CD4-positive, alpha-beta memory T cell (primary cell): ENCODE measurements at regions of chr11 and their contacts with region 1.

Region 1: DNA sequence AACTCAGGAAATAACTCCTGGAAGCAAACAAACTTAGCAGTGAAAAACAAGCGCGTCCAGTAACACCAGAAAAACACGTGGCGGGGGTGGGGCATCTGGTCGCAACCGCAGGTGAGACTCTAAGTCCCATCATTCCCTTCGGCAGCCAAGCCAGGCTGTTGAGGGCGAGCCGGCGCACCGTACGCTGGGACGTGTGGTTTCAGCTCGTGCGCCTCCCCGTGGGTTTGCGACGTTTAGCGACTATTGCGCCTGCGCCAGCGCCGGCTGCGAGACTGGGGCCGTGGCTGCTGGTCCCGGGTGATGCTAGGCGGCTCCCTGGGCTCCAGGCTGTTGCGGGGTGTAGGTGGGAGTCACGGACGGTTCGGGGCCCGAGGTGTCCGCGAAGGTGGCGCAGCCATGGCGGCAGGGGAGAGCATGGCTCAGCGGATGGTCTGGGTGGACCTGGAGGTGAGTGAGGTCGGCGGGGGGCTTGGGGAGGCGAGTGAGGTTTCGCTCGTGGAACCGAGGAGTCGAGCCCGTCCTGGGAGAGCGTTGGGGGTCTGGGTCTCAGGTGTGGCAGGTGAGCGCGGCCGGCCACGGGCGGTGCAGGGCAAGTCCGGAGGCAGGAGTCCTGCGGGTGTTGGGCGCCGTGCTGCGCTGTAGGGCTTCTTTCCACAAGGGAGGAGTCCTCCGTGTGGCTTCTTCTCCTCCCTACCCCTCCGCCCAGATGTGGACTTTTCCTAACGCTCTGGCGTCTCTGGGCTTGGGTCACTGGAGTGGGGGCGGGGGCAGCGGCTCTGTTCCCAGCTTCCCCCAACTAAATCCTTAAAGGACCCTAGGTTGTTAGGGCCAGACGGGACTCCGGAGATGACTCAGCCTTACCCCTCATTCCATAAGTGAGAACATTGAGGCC is at the start of gene REXO2:
- DNase-seq: peak; percentile 91 to 94 (median 93)
- H3K4me3 ChIP-seq: peak within 1 kb of the TSS; percentile 71 to 98
- H3K4me3 Mint-ChIP-seq: peak within 1 kb of the TSS; percentile 93 to 99 (median 98)
- H3K27ac ChIP-seq: peak within 1 kb of the TSS; percentile 73
- H3K27ac Mint-ChIP-seq: peak within 1 kb of the TSS; percentile 92 to 98 (median 95)
- H3K4me1 ChIP-seq: peaks cover 32% of the 10 kb centered on the region
- H3K4me1 Mint-ChIP-seq: peaks cover 26 to 34% (median 30%) of the 10 kb centered on the region in 4 donors
- H3K27me3 ChIP-seq: no peaks in the 10 kb centered on the region
- H3K27me3 Mint-ChIP-seq: no peaks in the 10 kb centered on the region
- total RNA-seq, gene REXO2: 64.8 to 70.4 TPM

Region 2: GRCh38 chr11:113875234-113876073 is 564.0 kb before region 1 on chr11 and contains the start of gene USP28:
- CTCF ChIA-PET with region 1: no interaction called
- POLR2A ChIA-PET with region 1: no interaction called
- intact Hi-C with region 1: loop called (anchors 5 kb)
- DNase-seq: peak; percentile 71 to 84 (median 76)
- H3K4me3 ChIP-seq: peak within 1 kb of the TSS; percentile 48 to 78
- H3K4me3 Mint-ChIP-seq: peak within 1 kb of the TSS; percentile 98 to 100 (median 99)
- H3K27ac ChIP-seq: peak within 1 kb of the TSS; percentile 68
- H3K27ac Mint-ChIP-seq: peak within 1 kb of the TSS; percentile 91 to 99 (median 98)
- H3K4me1 ChIP-seq: peaks cover 24% of the 10 kb centered on the region
- H3K4me1 Mint-ChIP-seq: peaks cover 23 to 55% (median 40%) of the 10 kb centered on the region in 4 donors
- H3K27me3 ChIP-seq: no peaks in the 10 kb centered on the region
- H3K27me3 Mint-ChIP-seq: no peaks in the 10 kb centered on the region
- total RNA-seq, gene USP28: 17.2 to 17.3 TPM

Region 3: GRCh38 chr11:113994077-113994954 is 445.2 kb before region 1 on chr11:
- CTCF ChIA-PET with region 1: no interaction called
- POLR2A ChIA-PET with region 1: no interaction called
- intact Hi-C with region 1: loop called (anchors 1 kb)
- DNase-seq: peak in 4 of 5 donors; percentile 18 to 33 (median 22)
- H3K4me3 ChIP-seq: no peak overlapping the region
- H3K4me3 Mint-ChIP-seq: no peak overlapping the region
- H3K27ac ChIP-seq: no peak overlapping the region
- H3K27ac Mint-ChIP-seq: no peak overlapping the region
- H3K4me1 ChIP-seq: no peaks in the 10 kb centered on the region
- H3K4me1 Mint-ChIP-seq: peaks cover 0 to 1% (median 0%) of the 10 kb centered on the region in 4 donors
- H3K27me3 ChIP-seq: no peaks in the 10 kb centered on the region
- H3K27me3 Mint-ChIP-seq: peaks cover 6 to 13% of the 10 kb centered on the region in 2 donors

Region 4: GRCh38 chr11:114348200-114349191 is 91.0 kb before region 1 on chr11:
- CTCF ChIA-PET with region 1: no interaction called
- POLR2A ChIA-PET with region 1: interaction called, 3 read pairs
- intact Hi-C with region 1: loop called (anchors 1 kb)
- DNase-seq: peak in 4 of 5 donors; percentile 24 to 45 (median 38)
- H3K4me3 ChIP-seq: no peak overlapping the region
- H3K4me3 Mint-ChIP-seq: peak overlapping the region in 2 of 8 donors; percentile 33 to 40
- H3K27ac ChIP-seq: no peak overlapping the region
- H3K27ac Mint-ChIP-seq: no peak overlapping the region
- H3K4me1 ChIP-seq: no peaks in the 10 kb centered on the region
- H3K4me1 Mint-ChIP-seq: peaks cover 1 to 7% (median 5%) of the 10 kb centered on the region in 4 donors
- H3K27me3 ChIP-seq: no peaks in the 10 kb centered on the region
- H3K27me3 Mint-ChIP-seq: no peaks in the 10 kb centered on the region

Region 5: DNA sequence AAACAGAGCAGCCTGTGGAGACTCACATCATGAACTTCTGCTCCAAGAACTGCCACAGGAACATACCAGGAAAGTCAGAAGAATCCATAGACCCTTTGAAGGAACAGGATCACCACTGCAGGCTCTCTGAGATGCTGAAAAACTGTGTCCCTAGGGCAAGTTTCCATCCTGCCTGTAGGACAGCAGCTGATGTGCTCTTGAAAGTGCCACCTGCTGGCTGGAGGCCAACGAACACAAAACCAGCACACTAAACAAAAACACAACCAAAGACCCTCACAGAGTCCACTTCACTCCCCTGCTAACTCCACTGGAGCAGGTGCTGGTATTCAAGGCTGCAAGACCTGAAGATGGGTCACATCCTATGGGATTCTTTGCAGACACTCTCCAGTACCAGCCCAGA is 132.2 kb after region 1 on chr11:
- CTCF ChIA-PET with region 1: no interaction called
- POLR2A ChIA-PET with region 1: no interaction called
- intact Hi-C with region 1: no loop called
- DNase-seq: peak in 1 of 5 donors; percentile 0
- H3K4me3 ChIP-seq: no peak overlapping the region
- H3K4me3 Mint-ChIP-seq: no peak overlapping the region
- H3K27ac ChIP-seq: no peak overlapping the region
- H3K27ac Mint-ChIP-seq: no peak overlapping the region
- H3K4me1 ChIP-seq: no peaks in the 10 kb centered on the region
- H3K4me1 Mint-ChIP-seq: no peaks in the 10 kb centered on the region
- H3K27me3 ChIP-seq: no peaks in the 10 kb centered on the region
- H3K27me3 Mint-ChIP-seq: peaks cover 0 to 1% of the 10 kb centered on the region in 2 donors

Region 6: DNA sequence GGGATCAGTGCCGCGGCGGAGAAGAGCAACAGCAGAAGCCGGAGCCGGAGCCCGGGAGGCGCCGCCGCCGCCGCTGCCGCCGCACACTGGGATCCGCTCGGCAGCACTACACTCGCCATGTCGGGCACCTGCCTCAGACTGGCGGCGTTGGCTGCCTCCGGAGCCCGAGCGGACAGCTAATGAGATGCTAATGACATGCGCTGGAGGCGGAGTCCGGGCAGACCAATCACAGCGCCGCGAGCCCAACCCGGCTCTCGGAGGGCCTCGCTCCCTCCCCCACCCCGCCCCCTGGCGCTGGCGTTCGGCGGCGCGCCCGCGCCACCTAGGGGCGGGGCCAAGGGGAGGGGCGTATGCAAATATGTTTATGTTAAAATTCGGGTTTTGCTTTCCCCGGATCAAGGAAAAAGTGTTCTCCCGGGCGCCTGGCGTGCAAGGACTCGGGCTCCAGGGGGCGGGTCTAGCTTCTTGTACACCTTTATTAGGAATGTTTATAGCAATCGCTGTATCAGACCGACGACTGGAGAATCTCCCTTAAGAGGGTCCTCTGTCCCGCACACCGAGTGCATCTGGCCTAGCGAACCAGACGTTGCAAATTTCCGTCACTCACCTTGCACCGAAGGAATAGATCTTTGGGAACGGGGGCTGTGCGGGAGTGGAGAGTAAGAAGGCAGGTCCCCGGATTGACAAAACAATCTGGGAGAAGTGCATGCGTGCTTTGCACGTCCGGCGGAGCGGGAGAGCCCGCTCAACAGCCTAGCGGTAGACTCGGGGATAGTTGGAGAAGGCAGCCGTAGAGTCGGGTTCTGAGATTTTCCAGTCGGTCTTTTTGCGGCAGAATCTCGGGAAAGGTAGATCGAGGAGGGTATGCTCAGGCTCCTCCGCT is 1065.0 kb after region 1 on chr11 and contains the start of gene CADM1:
- CTCF ChIA-PET with region 1: no interaction called
- POLR2A ChIA-PET with region 1: no interaction called
- intact Hi-C with region 1: loop called (anchors 10 kb)
- DNase-seq: peak; percentile 74 to 91 (median 79)
- H3K4me3 ChIP-seq: peak within 1 kb of the TSS; percentile 54 to 57
- H3K4me3 Mint-ChIP-seq: peak within 1 kb of the TSS; percentile 84 to 91 (median 85)
- H3K27ac ChIP-seq: no peak within 1 kb of the TSS
- H3K27ac Mint-ChIP-seq: peak within 1 kb of the TSS in 5 of 7 donors; percentile 56 to 82 (median 77)
- H3K4me1 ChIP-seq: peaks cover 31% of the 10 kb centered on the region
- H3K4me1 Mint-ChIP-seq: peaks cover 4 to 11% (median 5%) of the 10 kb centered on the region in 4 donors
- H3K27me3 ChIP-seq: peaks cover 26% of the 10 kb centered on the region
- H3K27me3 Mint-ChIP-seq: peaks cover 9 to 18% of the 10 kb centered on the region in 2 donors
- total RNA-seq, gene CADM1: 3.8 to 5.6 TPM